Activated T-helper 2 cell treated with anti-CD3 and anti-CD28 coated beads, Interferon-gamma antibody, Interleukin-2, Interleukin-4, amounts not matched to agents 10 μg/mL and 5 μg/mL and 100 μg/mL, durations not matched to agents 14 hours and 24 hours and 36 hours (primary cell): ENCODE measurements at regions of chr11 and their contacts with region 1.

Region 1: DNA sequence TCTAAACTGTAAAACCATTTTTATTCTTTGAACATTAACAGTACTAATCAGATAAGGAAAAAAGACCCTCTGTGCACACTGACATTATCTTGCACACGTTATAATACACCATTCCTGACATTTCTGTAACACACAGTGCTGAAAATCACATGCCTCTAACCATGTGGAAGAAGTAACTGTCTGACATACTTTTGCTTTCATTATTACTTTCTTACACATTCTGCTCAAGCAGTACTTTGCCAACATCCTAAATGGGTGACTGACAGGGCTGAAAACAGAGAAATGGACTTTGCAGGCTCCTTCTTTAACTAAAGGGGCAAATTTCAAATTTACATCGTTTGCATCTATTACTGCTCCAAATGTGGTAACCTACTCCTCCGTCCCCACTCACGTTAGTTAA is 22.8 kb upstream of the TP53AIP1 start:
- DNase-seq: no peak
- H3K4me3 Mint-ChIP-seq: peak overlapping the region; percentile 9
- H3K27ac Mint-ChIP-seq: no peak overlapping the region
- H3K4me1 Mint-ChIP-seq: peaks cover 55% of the 10 kb centered on the region
- H3K27me3 Mint-ChIP-seq: peaks cover 1% of the 10 kb centered on the region

Region 2: DNA sequence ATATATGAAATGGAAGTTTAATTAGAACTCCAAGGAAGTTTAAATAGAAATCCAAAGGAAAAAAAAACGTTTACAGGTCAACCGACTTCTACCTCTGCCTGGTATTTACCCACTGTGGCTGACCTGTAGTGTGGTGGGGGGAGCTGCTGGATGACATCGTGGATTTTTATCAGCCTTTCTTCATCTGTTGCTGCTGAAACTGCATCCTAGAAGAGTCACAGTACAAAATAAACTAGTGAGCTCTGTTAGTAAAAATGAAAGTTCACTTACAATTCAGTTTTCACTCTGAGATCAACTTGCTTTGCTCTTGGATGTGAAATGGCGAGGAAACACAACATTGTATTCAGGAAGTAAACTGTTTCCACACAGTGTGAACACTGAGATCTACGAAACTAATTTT is 20.4 kb after region 1 on chr11:
- intact Hi-C with region 1: loop called (anchors 2 kb)
- DNase-seq: no peak
- H3K4me3 Mint-ChIP-seq: no peak overlapping the region
- H3K27ac Mint-ChIP-seq: peak overlapping the region; percentile 3
- H3K4me1 Mint-ChIP-seq: peaks cover 13% of the 10 kb centered on the region
- H3K27me3 Mint-ChIP-seq: no peaks in the 10 kb centered on the region